IMR-90 (cell line): ENCODE measurements at regions of chr10 and their contacts with region 1.

Region 1: GRCh38 chr10:26556748-26557640 is 118.9 kb downstream of the APBB1IP start:
- DNase-seq: peak; percentile 11
- ATAC-seq: 0 out of 2 replicates have a peak, but pooled peaks have one; percentile 42
- H3K4me3 ChIP-seq: no peak overlapping the region
- H3K27ac ChIP-seq: no peak overlapping the region
- H3K4me1 ChIP-seq: no peaks in the 10 kb centered on the region
- H3K27me3 ChIP-seq: no peaks in the 10 kb centered on the region
- CTCF ChIP-seq: peak; percentile 55
- POLR2A ChIP-seq: no peak
- RAD21 ChIP-seq: peak; percentile 67

Region 2: DNA sequence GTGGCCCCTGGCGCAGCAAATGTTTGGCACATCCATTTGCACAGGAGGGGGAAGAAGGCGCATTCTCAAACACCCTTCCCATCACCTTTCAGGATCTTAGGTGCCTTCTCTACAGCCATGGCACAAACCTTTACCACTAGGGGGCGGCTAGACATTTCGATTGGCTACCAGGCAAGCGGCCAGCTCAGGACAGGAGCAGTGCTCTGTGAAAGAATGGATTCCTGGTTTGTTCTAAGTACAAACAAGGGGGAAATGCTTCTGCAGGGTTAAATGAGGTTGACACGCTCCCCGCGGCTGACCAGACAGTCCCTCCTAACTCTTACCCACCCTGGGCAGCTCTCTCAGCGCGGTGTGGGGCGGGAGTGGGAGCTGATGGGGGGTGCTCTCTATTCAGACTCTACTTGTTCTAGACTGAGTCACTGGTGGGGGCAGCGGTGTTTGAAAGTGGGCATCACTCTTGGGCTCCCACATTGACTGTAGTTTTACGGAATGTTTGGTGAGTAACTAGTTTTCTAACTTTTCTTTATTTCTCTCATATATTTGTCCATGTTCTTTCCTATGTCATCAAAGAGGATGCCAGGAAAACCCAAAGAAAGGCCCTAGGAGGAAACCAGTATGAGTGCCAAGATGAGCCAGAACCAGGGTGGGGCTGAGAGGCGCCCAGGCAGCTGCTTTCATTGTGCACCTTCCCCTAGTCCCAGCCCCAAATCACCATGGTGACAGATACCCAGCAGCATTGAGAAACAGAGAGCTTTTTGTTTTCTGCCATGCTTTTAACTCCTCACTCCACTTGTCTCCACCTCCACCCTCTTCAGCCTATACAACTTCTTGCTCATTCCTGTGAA is 1443.6 kb before region 1 on chr10:
- CTCF ChIA-PET with region 1: no interaction called
- POLR2A ChIA-PET with region 1: no interaction called
- dilution Hi-C with region 1: no loop called
- in situ Hi-C with region 1: no loop called
- intact Hi-C with region 1: loop called (anchors 2 kb)
- DNase-seq: peak; percentile 53
- ATAC-seq: peak; percentile 96
- H3K4me3 ChIP-seq: no peak overlapping the region
- H3K27ac ChIP-seq: no peak overlapping the region
- H3K4me1 ChIP-seq: no peaks in the 10 kb centered on the region
- H3K27me3 ChIP-seq: no peaks in the 10 kb centered on the region
- CTCF ChIP-seq: peak; percentile 59
- POLR2A ChIP-seq: no peak
- RAD21 ChIP-seq: peak; percentile 41

Region 3: DNA sequence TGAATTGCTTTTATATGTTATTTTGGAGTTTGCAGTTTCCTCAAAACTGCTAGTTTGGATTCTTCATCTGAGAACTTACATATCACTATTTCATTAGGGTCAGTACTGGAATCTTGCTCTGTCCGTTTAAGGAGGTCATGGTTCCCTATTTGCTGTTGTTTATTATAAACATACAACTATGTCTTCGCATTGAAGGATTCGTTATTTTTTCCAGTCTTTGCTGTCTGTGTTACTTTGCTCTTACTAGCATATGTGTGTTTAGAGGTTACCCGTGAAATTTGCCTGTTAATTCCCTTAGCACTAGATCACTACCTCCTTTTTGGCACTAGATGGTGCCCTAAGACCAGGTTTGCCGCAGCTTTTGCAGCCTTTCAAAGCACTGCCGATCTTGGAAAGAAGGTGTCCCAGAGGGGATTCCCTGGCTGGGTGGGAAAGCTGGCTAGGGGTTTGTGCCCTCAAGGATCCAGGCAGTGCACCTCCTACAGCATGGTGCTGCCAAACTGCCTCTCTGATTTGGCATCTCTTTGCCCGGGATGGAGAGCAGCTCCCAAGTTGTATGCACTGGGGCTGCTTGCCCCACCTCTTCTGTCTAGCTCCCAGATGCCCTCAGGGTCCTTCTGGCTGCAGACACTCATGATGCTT is 221.9 kb before region 1 on chr10:
- CTCF ChIA-PET with region 1: no interaction called
- POLR2A ChIA-PET with region 1: no interaction called
- dilution Hi-C with region 1: no loop called
- in situ Hi-C with region 1: no loop called
- intact Hi-C with region 1: loop called (anchors 1 kb)
- DNase-seq: peak; percentile 6
- ATAC-seq: no peak
- H3K4me3 ChIP-seq: no peak overlapping the region
- H3K27ac ChIP-seq: no peak overlapping the region
- H3K4me1 ChIP-seq: no peaks in the 10 kb centered on the region
- H3K27me3 ChIP-seq: no peaks in the 10 kb centered on the region
- CTCF ChIP-seq: peak; percentile 42
- POLR2A ChIP-seq: no peak
- RAD21 ChIP-seq: peak; percentile 56

Region 4: GRCh38 chr10:26540601-26541000 is 16.4 kb before region 1 on chr10:
- CTCF ChIA-PET with region 1: no interaction called
- POLR2A ChIA-PET with region 1: no interaction called
- dilution Hi-C with region 1: no loop called
- in situ Hi-C with region 1: no loop called
- intact Hi-C with region 1: no loop called
- DNase-seq: no peak
- ATAC-seq: no peak
- H3K4me3 ChIP-seq: no peak overlapping the region
- H3K27ac ChIP-seq: no peak overlapping the region
- H3K4me1 ChIP-seq: no peaks in the 10 kb centered on the region
- H3K27me3 ChIP-seq: no peaks in the 10 kb centered on the region
- CTCF ChIP-seq: no peak
- POLR2A ChIP-seq: no peak
- RAD21 ChIP-seq: no peak

Region 5: DNA sequence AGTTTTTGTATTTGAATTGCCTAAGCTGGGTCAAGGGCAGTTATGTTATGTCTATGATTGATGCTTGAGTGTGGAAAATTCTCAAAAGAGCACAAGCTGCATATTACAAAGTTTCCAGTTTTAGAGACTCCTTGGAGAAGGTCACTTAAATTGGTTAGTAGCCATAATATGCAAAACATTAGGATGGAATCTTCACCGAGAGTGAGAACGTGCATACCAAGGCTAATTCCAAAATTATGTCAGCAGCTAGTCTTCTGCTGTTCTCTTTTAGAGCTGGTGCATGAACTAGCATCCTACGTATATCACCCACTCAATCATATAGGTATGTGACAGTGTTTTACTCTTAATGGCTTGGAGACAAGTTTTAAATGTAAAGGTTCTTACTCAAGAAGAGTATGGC is 1139.5 kb after region 1 on chr10:
- CTCF ChIA-PET with region 1: no interaction called
- POLR2A ChIA-PET with region 1: no interaction called
- dilution Hi-C with region 1: no loop called
- in situ Hi-C with region 1: no loop called
- intact Hi-C with region 1: no loop called
- DNase-seq: no peak
- ATAC-seq: no peak
- H3K4me3 ChIP-seq: no peak overlapping the region
- H3K27ac ChIP-seq: no peak overlapping the region
- H3K4me1 ChIP-seq: peaks cover 3% of the 10 kb centered on the region; the same call in 1 of the 2 replicates
- H3K27me3 ChIP-seq: no peaks in the 10 kb centered on the region
- CTCF ChIP-seq: no peak
- POLR2A ChIP-seq: no peak
- RAD21 ChIP-seq: no peak